ENCODE measurements at regions of chr16 and their contacts with region 1.

Region 1: GRCh38 chr16:76278980-76279379 is 1.8 kb downstream of the CNTNAP4 start:
- DNase-seq: peak in 1 of 2 experiments; percentile 26
- H3K4me3 ChIP-seq: no peak overlapping the region
- H3K4me3 Mint-ChIP-seq: no peak overlapping the region
- H3K27ac Mint-ChIP-seq: no peak overlapping the region
- H3K4me1 ChIP-seq: no peaks in the 10 kb centered on the region
- H3K4me1 Mint-ChIP-seq: no peaks in the 10 kb centered on the region
- H3K27me3 ChIP-seq: no peaks in the 10 kb centered on the region
- H3K27me3 Mint-ChIP-seq: no peaks in the 10 kb centered on the region
- CTCF ChIP-seq: peak; percentile 32 to 44

Region 2: GRCh38 chr16:76639685-76640289 is 360.8 kb after region 1 on chr16:
- CTCF ChIA-PET with region 1: interaction called, 3 read pairs
- POLR2A ChIA-PET with region 1: no interaction called
- intact Hi-C with region 1: loop called (anchors 1 kb)
- DNase-seq: peak; percentile 64 to 70
- H3K4me3 ChIP-seq: no peak overlapping the region
- H3K4me3 Mint-ChIP-seq: no peak overlapping the region
- H3K27ac Mint-ChIP-seq: no peak overlapping the region
- H3K4me1 ChIP-seq: no peaks in the 10 kb centered on the region
- H3K4me1 Mint-ChIP-seq: no peaks in the 10 kb centered on the region
- H3K27me3 ChIP-seq: no peaks in the 10 kb centered on the region
- H3K27me3 Mint-ChIP-seq: no peaks in the 10 kb centered on the region
- CTCF ChIP-seq: peak; percentile 48 to 69

Measured in Caco-2 (cell line).